GM23248 (cell line): ENCODE measurements at regions of chr9 and their contacts with region 1.

Region 1: GRCh38 chr9:86486891-86487837 is 133.0 kb upstream of the TUT7 start:
- DNase-seq: peak; percentile 77
- H3K4me3 ChIP-seq: no peak overlapping the region
- H3K27ac ChIP-seq: no peak overlapping the region
- H3K4me1 ChIP-seq: peaks cover 5% of the 10 kb centered on the region; the same call in 1 of the 2 replicates
- H3K27me3 ChIP-seq: no peaks in the 10 kb centered on the region

Region 2: GRCh38 chr9:86893811-86894490 is 406.8 kb after region 1 on chr9:
- in situ Hi-C with region 1: no loop called
- DNase-seq: peak; percentile 40
- H3K4me3 ChIP-seq: no peak overlapping the region
- H3K27ac ChIP-seq: no peak overlapping the region
- H3K4me1 ChIP-seq: peaks cover 10% of the 10 kb centered on the region
- H3K27me3 ChIP-seq: no peaks in the 10 kb centered on the region

Region 3: DNA sequence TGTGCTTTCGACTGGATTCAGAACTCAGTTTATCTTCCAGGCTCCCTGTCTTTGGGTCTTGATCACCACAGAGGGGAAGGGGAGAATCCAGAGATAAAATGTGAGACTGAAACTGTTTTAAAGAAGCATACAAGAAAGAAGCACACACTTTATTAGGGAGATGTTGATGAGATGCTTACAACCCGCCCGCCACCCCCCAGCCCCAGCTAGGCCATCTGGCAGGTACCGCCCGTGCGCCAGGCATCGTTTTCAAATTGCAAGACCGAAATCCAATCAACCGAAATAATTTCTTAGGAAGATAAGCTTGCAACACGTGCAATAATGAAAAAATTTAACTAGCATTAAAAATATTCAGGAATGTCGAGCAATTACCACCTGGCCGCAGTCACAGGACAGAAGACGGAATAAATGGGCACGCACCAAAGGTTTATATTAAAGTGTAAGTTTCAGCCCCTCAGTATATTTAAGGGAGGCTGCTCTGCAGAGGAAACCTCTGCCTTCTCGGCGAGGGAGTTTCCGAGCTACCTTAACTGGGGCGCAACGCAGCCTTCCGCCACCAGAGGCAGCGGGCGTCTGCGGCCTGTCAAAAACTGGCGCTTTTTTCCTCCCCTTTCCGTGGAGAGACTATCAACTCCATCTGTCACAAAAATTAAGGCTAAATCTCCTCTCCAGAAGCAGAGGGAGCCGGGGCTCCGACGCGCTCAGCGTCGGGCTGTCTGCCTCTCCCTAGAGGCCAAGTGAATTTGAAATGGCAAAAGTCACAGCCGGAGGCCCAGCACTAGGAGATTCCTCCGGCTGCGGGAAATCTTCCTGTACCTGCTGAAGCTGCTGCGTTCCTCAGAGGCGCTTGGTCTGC is 461.1 kb after region 1 on chr9:
- in situ Hi-C with region 1: loop called (anchors 10 kb)
- DNase-seq: peak; percentile 91
- H3K4me3 ChIP-seq: peak overlapping the region; percentile 80
- H3K27ac ChIP-seq: peak overlapping the region; percentile 72
- H3K4me1 ChIP-seq: peaks cover 15% of the 10 kb centered on the region
- H3K27me3 ChIP-seq: no peaks in the 10 kb centered on the region